Natural killer cell (primary cell): ENCODE measurements at regions of chr11 and their contacts with region 1.

Region 1: DNA sequence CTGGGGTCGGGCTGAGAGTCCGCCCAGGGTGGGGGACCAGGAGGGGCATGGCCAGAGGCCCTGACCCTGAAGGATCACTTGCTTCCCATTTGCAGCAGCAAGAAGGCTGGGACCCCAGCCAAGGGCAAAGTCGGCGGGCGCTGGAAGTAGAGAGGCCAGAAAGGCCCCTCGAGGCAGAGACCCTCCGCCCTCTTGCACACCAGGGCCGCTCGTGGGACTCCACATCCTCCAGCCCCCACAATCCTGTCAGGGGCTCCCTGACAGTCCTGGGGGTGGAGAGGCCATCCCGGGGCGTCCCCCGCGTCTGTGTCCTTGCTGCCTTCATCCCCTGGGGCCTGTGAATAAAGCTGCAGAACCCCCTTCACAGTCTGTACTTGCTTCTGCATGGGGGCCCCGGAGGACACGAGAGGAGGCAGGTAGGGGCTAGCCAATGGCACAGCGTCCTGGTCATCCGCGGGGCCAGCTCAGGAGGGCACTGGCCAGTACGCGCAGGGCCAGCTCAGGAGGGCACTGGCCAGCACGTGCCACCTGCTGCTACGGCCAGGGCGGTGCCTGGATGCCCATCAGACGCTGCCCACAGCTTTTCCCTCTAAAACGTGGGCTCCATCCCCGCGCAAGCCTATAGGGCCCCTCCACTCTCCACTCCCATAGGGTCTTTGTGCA is 8.7 kb upstream of the MRPL23 start:
- DNase-seq: peak in 1 of 2 donors; percentile 12
- ATAC-seq: no peak
- H3K4me3 ChIP-seq: no peak overlapping the region
- H3K4me3 Mint-ChIP-seq: no peak overlapping the region
- H3K27ac ChIP-seq: no peak overlapping the region
- H3K27ac Mint-ChIP-seq: no peak overlapping the region
- H3K4me1 ChIP-seq: peaks cover 9% of the 10 kb centered on the region
- H3K4me1 Mint-ChIP-seq: peaks cover 4 to 19% of the 10 kb centered on the region in 2 donors
- H3K27me3 ChIP-seq: no peaks in the 10 kb centered on the region
- H3K27me3 Mint-ChIP-seq: peaks cover 0 to 2% of the 10 kb centered on the region in 2 donors
- CTCF ChIP-seq: no peak

Region 2: GRCh38 chr11:1913271-1914060 is 25.0 kb before region 1 on chr11:
- intact Hi-C with region 1: loop called (anchors 1 kb)
- DNase-seq: no peak
- ATAC-seq: no peak
- H3K4me3 ChIP-seq: no peak overlapping the region
- H3K4me3 Mint-ChIP-seq: no peak overlapping the region
- H3K27ac ChIP-seq: no peak overlapping the region
- H3K27ac Mint-ChIP-seq: peak overlapping the region in 1 of 2 donors; percentile 41
- H3K4me1 ChIP-seq: peaks cover 20% of the 10 kb centered on the region
- H3K4me1 Mint-ChIP-seq: peaks cover 0 to 31% of the 10 kb centered on the region in 2 donors
- H3K27me3 ChIP-seq: no peaks in the 10 kb centered on the region
- H3K27me3 Mint-ChIP-seq: peaks cover 0 to 19% of the 10 kb centered on the region in 2 donors
- CTCF ChIP-seq: no peak

Region 3: DNA sequence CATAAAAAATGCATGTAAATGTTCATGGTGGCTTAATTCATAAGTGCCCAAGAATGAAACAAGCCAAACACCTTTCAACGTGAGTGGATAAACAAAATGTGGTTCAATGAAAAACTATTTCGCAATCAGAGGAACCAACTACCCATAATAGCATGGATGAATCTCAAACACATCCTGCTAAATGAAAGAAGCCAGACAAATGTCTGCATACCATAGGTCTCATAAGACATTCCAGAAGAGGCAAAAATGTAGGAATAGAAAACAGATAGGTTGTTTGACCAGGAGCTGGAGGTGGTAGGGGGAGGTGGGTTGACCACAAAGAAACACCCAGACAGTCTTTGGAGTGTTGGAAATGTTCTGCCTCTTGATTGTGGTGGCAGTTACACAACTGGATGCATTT is 1239.9 kb after region 1 on chr11:
- intact Hi-C with region 1: no loop called
- DNase-seq: no peak
- ATAC-seq: no peak
- H3K4me3 ChIP-seq: no peak overlapping the region
- H3K4me3 Mint-ChIP-seq: no peak overlapping the region
- H3K27ac ChIP-seq: no peak overlapping the region
- H3K27ac Mint-ChIP-seq: no peak overlapping the region
- H3K4me1 ChIP-seq: no peaks in the 10 kb centered on the region
- H3K4me1 Mint-ChIP-seq: peaks cover 0 to 9% of the 10 kb centered on the region in 2 donors
- H3K27me3 ChIP-seq: no peaks in the 10 kb centered on the region
- H3K27me3 Mint-ChIP-seq: peaks cover 0 to 3% of the 10 kb centered on the region in 2 donors
- CTCF ChIP-seq: no peak